A549 (cell line): ENCODE measurements at regions of chr5 and their contacts with region 1.

Region 1: GRCh38 chr5:170420780-170421412 is 31.7 kb upstream of the KCNMB1 start:
- DNase-seq: peak; percentile 71 to 79
- ATAC-seq: peak; percentile 71 to 92; a peak in 5 of 6 replicates
- H3K4me3 ChIP-seq: no peak overlapping the region
- H3K27ac ChIP-seq: no peak overlapping the region
- H3K4me1 ChIP-seq: peaks cover 7% of the 10 kb centered on the region; the same call in 2 of the 3 replicates
- CTCF ChIP-seq: peak; percentile 82
- EP300 ChIP-seq: no peak
- POLR2A ChIP-seq: no peak
- RAD21 ChIP-seq: peak; percentile 73 to 74

Region 2: GRCh38 chr5:170267431-170268152 is 153.3 kb before region 1 on chr5:
- CTCF ChIA-PET with region 1: interaction called, 43 read pairs
- POLR2A ChIA-PET with region 1: no interaction called
- DNase-seq: peak; percentile 76 to 79
- ATAC-seq: peak; percentile 94 to 98
- H3K4me3 ChIP-seq: no peak overlapping the region
- H3K27ac ChIP-seq: no peak overlapping the region
- H3K4me1 ChIP-seq: no peaks in the 10 kb centered on the region
- CTCF ChIP-seq: peak; percentile 85
- EP300 ChIP-seq: no peak
- POLR2A ChIP-seq: no peak
- RAD21 ChIP-seq: peak; percentile 61 to 69; a peak in 4 of 5 replicates

Region 3: GRCh38 chr5:170273945-170274710 is 146.8 kb before region 1 on chr5:
- CTCF ChIA-PET with region 1: interaction called, 43 read pairs
- POLR2A ChIA-PET with region 1: no interaction called
- DNase-seq: peak; percentile 27 to 60
- ATAC-seq: peak; percentile 65 to 83
- H3K4me3 ChIP-seq: no peak overlapping the region
- H3K27ac ChIP-seq: peak overlapping the region in 1 of 2 experiments; percentile 29; a peak in 1 of 6 replicates
- H3K4me1 ChIP-seq: peaks cover 12% of the 10 kb centered on the region; the same call in 2 of the 3 replicates
- CTCF ChIP-seq: peak; percentile 22; the same call in 1 of the 3 replicates
- EP300 ChIP-seq: no peak
- POLR2A ChIP-seq: no peak
- RAD21 ChIP-seq: peak; percentile 30 to 55; a peak in 3 of 5 replicates

Region 4: DNA sequence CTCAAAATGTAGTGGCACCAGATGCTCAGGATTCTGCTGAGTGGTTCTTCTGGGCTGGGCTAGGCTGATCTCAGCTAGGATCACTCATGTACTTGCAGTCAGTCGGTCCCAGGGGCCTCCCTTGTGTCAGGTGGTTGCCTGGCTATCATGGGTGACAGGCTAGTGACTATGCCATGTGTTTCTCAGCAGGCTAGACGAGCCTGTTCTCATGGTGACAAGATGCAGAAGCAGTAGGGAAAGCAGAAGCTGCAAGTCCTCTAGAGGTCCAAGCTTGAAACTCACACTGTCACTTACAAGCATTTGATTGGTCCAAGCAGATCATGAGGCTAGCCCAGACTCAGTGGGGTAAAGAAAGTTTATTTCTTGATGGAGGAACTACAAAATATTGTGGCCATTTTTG is 16.5 kb before region 1 on chr5:
- CTCF ChIA-PET with region 1: interaction called, 30 read pairs
- POLR2A ChIA-PET with region 1: no interaction called
- DNase-seq: no peak
- ATAC-seq: no peak
- H3K4me3 ChIP-seq: no peak overlapping the region
- H3K27ac ChIP-seq: no peak overlapping the region
- H3K4me1 ChIP-seq: no peaks in the 10 kb centered on the region
- CTCF ChIP-seq: no peak
- EP300 ChIP-seq: no peak
- POLR2A ChIP-seq: no peak
- RAD21 ChIP-seq: no peak

Region 5: GRCh38 chr5:170504031-170504596 is 83.2 kb after region 1 on chr5:
- CTCF ChIA-PET with region 1: no interaction called
- POLR2A ChIA-PET with region 1: no interaction called
- DNase-seq: peak in 1 of 2 experiments; percentile 15
- ATAC-seq: peak; percentile 48 to 70; a peak in 5 of 6 replicates
- H3K4me3 ChIP-seq: peak overlapping the region; percentile 46
- H3K27ac ChIP-seq: peak overlapping the region; percentile 33 to 83; a peak in 4 of 6 replicates
- H3K4me1 ChIP-seq: peaks cover 4% of the 10 kb centered on the region; the same call in 1 of the 3 replicates
- CTCF ChIP-seq: no peak
- EP300 ChIP-seq: no peak
- POLR2A ChIP-seq: no peak
- RAD21 ChIP-seq: no peak